Tibial artery (tissue), 4 donors: ENCODE measurements at regions of chr11 and their contacts with region 1.

Region 1: DNA sequence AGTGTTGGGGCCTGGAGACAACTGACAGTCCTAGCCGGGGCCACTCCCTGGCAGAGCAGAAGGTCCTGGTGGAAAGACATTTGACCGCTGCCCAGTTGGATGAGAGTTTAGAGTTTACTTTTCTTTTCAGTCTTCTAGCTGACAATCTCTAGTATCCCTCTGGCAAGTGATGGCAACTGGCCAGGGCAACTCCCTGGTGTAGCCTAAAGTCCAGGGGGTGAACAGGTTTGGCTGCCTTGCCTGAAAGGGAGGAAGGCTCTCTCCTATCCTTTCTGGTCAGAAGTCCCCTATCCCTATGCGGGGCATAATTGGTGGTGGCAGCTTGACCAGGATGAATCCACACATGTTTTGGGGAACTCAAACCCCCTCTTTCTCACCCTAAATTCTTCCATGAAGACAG is 16.8 kb upstream of the MSANTD2 start:
- DNase-seq: no peak
- H3K4me3 ChIP-seq: no peak overlapping the region
- H3K27ac ChIP-seq: no peak overlapping the region
- H3K4me1 ChIP-seq: no peaks in the 10 kb centered on the region
- H3K27me3 ChIP-seq: peaks cover 0 to 27% of the 10 kb centered on the region in 2 donors
- CTCF ChIP-seq: no peak

Region 2: GRCh38 chr11:124644426-124645280 is 172.4 kb before region 1 on chr11:
- intact Hi-C with region 1: loop called (anchors 5 kb)
- DNase-seq: peak; percentile 36 to 77
- H3K4me3 ChIP-seq: peak overlapping the region; percentile 24 to 38
- H3K27ac ChIP-seq: peak overlapping the region; percentile 55 to 58
- H3K4me1 ChIP-seq: peaks cover 0 to 22% (median 6%) of the 10 kb centered on the region in 4 donors
- H3K27me3 ChIP-seq: no peaks in the 10 kb centered on the region
- CTCF ChIP-seq: peak; percentile 73 to 78